Dorsolateral prefrontal cortex (tissue), 120 donors: ENCODE measurements at regions of chr11 and their contacts with region 1.

Region 1: GRCh38 chr11:27362749-27363575 is at the start of gene CCDC34:
- DNase-seq: peak; percentile 69 to 91 (median 83)
- H3K4me3 ChIP-seq: peak within 1 kb of the TSS; percentile 64 to 91 (median 79)
- H3K27ac ChIP-seq: peak within 1 kb of the TSS in 37 of 59 donors; percentile 7 to 81 (median 55)
- H3K27me3 ChIP-seq: no peaks in the 10 kb centered on the region
- CTCF ChIP-seq: peak in 14 of 56 donors; percentile 10 to 42 (median 27)
- total RNA-seq, gene CCDC34: 3.1 to 23.2 (median 14.1) TPM

Region 2: DNA sequence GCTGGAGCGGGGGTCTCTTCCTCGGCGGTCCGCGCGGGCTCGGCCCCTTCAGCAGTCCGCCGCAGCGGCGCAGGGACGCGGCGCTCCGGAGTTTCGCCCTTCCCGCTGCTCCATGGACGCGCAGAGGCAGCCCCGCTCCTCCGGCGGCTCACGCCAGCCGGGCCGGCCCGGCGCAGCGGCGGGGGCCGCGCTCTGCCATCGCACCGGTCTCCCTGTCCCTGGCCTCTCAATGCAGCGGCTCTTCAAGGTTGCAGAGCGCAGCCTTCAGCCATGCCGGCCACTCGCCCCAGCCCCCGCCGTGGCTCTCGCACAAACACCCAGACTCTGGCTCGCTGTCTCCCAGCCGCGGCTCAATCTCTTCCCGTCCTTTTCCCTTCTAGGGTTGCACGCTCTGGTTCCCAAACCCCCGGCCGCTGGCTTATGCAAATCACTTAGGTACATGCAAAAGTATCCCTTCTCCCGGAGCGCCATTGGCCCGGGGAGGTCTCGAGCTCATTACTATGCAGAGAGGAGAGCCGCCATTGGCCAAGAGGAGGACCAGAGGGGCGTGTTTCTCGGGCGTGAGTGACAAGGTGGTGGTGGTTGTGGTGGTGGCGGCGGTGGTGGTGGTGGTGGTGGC is 109.5 kb after region 1 on chr11 and contains the start of gene LGR4:
- intact Hi-C with region 1: loop called (anchors 5 to 10 kb)
- DNase-seq: peak; percentile 64 to 95 (median 93)
- H3K4me3 ChIP-seq: peak within 1 kb of the TSS; percentile 62 to 94 (median 80)
- H3K27ac ChIP-seq: peak within 1 kb of the TSS in 58 of 59 donors; percentile 9 to 93 (median 82)
- H3K27me3 ChIP-seq: no peaks in the 10 kb centered on the region
- CTCF ChIP-seq: peak in 1 of 56 donors; percentile 5
- total RNA-seq, gene LGR4: 13.8 to 46.9 (median 27.6) TPM